ENCODE measurements at regions of chr7 and their contacts with region 1.

Region 1: DNA sequence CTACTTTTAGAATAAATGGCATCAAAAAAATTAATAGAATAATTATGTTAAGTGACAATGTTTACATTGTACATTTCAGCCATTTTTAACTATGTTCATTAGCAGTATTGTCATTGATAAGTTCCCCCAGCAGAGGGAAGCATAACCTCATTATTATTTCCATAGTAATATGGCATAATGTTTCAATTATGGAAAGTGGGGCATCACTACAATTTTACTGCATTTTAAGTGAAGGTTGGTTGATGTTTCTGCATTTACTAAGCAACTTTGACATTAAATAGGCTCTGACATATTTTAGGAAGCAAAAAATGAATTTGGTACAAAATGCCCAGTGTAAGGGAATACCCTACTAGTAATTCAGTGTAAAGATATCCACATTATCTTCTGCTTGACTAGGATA is 218.3 kb downstream of the SEMA3A start:
- DNase-seq: no peak
- H3K4me3 Mint-ChIP-seq: no peak overlapping the region
- H3K27ac Mint-ChIP-seq: no peak overlapping the region
- H3K4me1 Mint-ChIP-seq: no peaks in the 10 kb centered on the region
- H3K27me3 Mint-ChIP-seq: no peaks in the 10 kb centered on the region

Region 2: GRCh38 chr7:84188786-84189405 is 212.6 kb after region 1 on chr7:
- intact Hi-C with region 1: loop called (anchors 5 kb)
- DNase-seq: no peak
- H3K4me3 Mint-ChIP-seq: no peak overlapping the region
- H3K27ac Mint-ChIP-seq: no peak overlapping the region
- H3K4me1 Mint-ChIP-seq: peaks cover 10% of the 10 kb centered on the region
- H3K27me3 Mint-ChIP-seq: peaks cover 9% of the 10 kb centered on the region

Region 3: GRCh38 chr7:85023045-85023712 is 1046.9 kb after region 1 on chr7:
- intact Hi-C with region 1: loop called (anchors 1 kb)
- DNase-seq: no peak
- H3K4me3 Mint-ChIP-seq: no peak overlapping the region
- H3K27ac Mint-ChIP-seq: no peak overlapping the region
- H3K4me1 Mint-ChIP-seq: no peaks in the 10 kb centered on the region
- H3K27me3 Mint-ChIP-seq: no peaks in the 10 kb centered on the region